Aorta (tissue), 5 donors: ENCODE measurements at regions of chr7 and their contacts with region 1.

Region 1: DNA sequence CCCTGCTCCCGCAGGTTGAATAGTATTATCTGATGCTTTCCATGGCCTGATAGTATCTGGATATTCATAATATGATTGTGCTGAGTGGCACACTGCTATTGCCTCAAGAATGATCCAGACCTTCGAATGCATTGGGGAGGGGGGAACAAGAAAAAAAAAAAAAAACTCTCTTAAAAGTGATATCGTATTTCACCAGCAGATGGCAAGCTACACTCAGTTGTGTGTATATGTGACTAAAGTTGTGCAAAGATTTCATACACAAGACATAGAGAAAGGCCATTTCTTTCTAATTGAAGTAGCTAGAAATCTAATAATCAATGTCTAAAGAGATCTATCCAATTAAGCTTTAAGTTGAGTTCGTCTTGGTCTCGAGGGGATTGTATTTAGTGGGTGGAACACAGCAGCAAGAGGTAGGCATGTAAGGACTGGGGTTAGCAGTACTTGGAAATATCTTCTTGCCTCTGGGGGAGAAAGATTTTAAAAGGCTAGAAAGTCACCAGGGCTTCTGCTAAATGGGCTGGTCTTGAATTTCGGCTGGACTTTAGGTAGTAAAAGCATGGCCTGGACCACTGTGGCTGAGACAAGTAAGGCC is 15.3 kb downstream of the SFRP4 start:
- DNase-seq: no peak
- ATAC-seq: peak; percentile 82
- H3K4me3 ChIP-seq: no peak overlapping the region
- H3K27ac ChIP-seq: no peak overlapping the region
- H3K4me1 ChIP-seq: no peaks in the 10 kb centered on the region
- H3K27me3 ChIP-seq: no peaks in the 10 kb centered on the region

Region 2: DNA sequence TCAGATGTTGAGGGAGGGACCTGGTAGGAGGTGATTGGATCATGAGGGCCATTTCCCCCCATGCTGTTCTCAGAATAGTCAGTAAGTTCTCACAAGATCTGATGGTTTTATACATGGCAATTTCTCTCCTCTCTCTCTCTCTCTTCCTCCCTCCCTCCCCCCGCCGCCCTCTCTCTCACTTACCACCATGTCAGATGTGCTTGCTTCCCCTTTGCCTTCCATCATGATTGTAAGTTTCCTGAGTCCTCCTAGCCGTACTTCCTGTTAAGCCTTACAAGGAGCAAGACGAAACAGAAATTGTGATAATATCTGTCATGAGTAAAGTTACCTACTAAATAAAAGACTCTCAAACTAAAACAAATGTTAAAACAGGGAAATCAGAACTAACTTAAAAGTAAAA is 237.6 kb before region 1 on chr7:
- intact Hi-C with region 1: no loop called
- DNase-seq: peak in 1 of 2 donors; percentile 57
- ATAC-seq: no peak
- H3K4me3 ChIP-seq: no peak overlapping the region
- H3K27ac ChIP-seq: no peak overlapping the region
- H3K4me1 ChIP-seq: no peaks in the 10 kb centered on the region
- H3K27me3 ChIP-seq: no peaks in the 10 kb centered on the region

Region 3: GRCh38 chr7:37942934-37943610 is 41.7 kb after region 1 on chr7:
- intact Hi-C with region 1: no loop called
- DNase-seq: peak; percentile 77 to 81
- ATAC-seq: peak; percentile 81
- H3K4me3 ChIP-seq: no peak overlapping the region
- H3K27ac ChIP-seq: no peak overlapping the region
- H3K4me1 ChIP-seq: no peaks in the 10 kb centered on the region
- H3K27me3 ChIP-seq: no peaks in the 10 kb centered on the region

Region 4: GRCh38 chr7:38107486-38107893 is 206.2 kb after region 1 on chr7:
- intact Hi-C with region 1: loop called (anchors 2 to 5 kb)
- DNase-seq: peak; percentile 50 to 76
- ATAC-seq: peak; percentile 85
- H3K4me3 ChIP-seq: no peak overlapping the region
- H3K27ac ChIP-seq: no peak overlapping the region
- H3K4me1 ChIP-seq: no peaks in the 10 kb centered on the region
- H3K27me3 ChIP-seq: no peaks in the 10 kb centered on the region

Region 5: DNA sequence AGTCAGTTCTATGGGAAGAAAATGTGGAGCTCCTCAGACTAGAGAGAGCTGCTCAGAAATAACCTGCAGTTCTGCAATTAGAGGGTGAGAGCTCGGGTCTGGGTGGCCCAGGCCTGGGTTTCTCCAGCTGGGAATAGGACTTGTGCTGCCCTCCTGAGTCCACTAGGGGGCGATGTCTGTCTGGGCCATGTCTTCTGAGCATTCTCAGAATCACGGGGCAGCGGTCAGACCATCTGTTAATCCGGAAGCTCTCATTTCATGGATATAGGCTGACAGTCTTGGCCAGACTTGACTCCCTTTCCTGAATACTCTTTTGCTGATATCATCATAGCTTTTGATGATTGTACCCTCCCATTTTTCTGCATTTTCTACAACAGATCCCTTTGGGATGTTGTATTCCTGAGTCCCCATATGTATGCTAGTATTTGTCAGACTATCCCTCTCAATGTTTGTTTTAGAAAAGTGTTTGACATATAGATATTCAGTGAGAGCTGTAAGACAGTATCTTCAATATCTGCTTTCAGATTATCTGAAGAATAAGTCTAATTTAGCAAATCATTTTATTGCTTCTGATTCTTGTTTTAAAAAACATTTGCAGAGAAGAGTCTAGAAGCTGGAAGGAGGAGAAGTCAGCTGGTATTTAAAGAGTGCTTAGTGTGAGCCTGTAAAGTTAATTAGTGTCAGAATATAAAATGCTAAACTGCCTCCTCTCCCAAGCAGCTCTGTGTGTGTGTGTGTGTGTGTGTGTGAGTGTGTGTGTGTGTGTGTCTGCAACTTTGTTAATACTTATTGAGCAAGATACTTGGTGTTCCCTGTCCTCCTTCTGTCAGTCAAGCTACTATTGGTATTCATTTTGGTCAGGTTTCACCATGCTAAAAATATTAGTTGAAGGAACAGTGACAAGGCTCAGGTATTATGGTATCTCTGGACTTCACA is 314.7 kb after region 1 on chr7:
- intact Hi-C with region 1: loop called (anchors 5 kb)
- DNase-seq: peak; percentile 88 to 89
- ATAC-seq: peak; percentile 93
- H3K4me3 ChIP-seq: no peak overlapping the region
- H3K27ac ChIP-seq: no peak overlapping the region
- H3K4me1 ChIP-seq: no peaks in the 10 kb centered on the region
- H3K27me3 ChIP-seq: no peaks in the 10 kb centered on the region

Region 6: GRCh38 chr7:38222481-38223096 is 321.3 kb after region 1 on chr7:
- intact Hi-C with region 1: loop called (anchors 5 kb)
- DNase-seq: no peak
- ATAC-seq: peak; percentile 88
- H3K4me3 ChIP-seq: no peak overlapping the region
- H3K27ac ChIP-seq: peak overlapping the region in 1 of 2 donors; percentile 22
- H3K4me1 ChIP-seq: peaks cover 0 to 2% of the 10 kb centered on the region in 2 donors
- H3K27me3 ChIP-seq: no peaks in the 10 kb centered on the region